Right ventricle myocardium inferior (tissue), 1 donor: ENCODE measurements at regions of chr4 and their contacts with region 1.

Region 1: GRCh38 chr4:101259876-101260275 is 87.5 kb downstream of the PPP3CA start:
- DNase-seq: no peak
- ATAC-seq: no peak

Region 2: GRCh38 chr4:101309925-101310324 is 50.0 kb after region 1 on chr4:
- intact Hi-C with region 1: loop called (anchors 10 kb)
- DNase-seq: no peak
- ATAC-seq: no peak